ENCODE measurements at regions of chr2 and their contacts with region 1.

Region 1: GRCh38 chr2:15664273-15665066 is 72.8 kb downstream of the DDX1 start:
- DNase-seq: no peak
- ATAC-seq: no peak
- H3K4me3 ChIP-seq: no peak overlapping the region
- H3K27ac ChIP-seq: no peak overlapping the region
- H3K4me1 ChIP-seq: no peaks in the 10 kb centered on the region
- H3K27me3 ChIP-seq: no peaks in the 10 kb centered on the region
- CTCF ChIP-seq: no peak

Region 2: DNA sequence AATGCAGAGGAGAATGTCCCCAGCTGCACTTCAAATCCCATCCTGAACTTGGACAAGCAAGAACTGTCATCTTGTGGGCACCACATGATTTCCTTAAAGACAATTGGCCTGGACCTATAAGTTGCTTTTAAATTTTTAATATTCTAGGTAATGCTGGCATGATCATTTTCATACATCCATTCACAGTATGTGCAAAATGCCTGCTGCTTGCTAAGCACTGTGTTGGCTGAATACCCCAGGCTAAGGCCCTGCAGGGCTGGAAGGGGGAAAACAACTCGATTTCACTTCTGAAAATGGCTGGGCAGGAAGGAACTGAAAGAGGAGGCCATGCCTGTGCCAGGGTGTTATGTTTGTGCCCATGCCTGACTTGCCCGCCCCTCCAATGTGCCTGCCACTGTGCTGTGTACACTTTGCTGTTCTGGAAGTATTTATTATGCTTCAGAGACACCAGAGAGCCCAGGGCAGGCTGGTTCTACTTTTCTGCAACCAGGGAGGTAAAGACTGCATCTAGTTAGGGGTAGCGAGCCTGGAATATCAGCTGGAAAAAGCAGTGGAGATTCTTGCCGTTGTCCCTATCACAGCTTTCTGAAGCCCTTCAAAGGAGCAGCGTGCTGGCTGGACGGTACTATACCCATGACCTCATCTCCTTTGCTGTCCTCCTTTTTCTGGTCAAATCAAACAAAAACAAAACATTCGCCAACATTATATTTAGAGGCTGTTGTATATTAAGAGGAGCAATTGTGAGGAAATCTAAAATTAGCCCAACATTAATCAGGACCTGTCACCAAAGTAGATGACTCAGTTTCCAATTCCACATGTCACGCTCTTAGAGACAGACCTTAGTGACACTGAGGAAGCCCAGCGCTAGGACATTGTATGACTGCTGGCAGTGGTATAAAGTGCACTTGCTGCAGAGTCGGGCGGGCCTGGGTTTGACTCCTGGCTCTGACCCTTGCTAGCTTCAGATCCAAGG is 85.3 kb after region 1 on chr2:
- intact Hi-C with region 1: loop called in 1 of 3 experiments (anchors 5 kb)
- DNase-seq: no peak
- ATAC-seq: no peak
- H3K4me3 ChIP-seq: no peak overlapping the region
- H3K27ac ChIP-seq: no peak overlapping the region
- H3K4me1 ChIP-seq: no peaks in the 10 kb centered on the region
- H3K27me3 ChIP-seq: no peaks in the 10 kb centered on the region
- CTCF ChIP-seq: no peak